Gastrocnemius medialis (tissue), 4 donors: ENCODE measurements at regions of chr7 and their contacts with region 1.

Region 1: GRCh38 chr7:5237286-5237685 is 45.5 kb upstream of the SLC29A4 start:
- DNase-seq: peak; percentile 44 to 58
- ATAC-seq: peak; percentile 52 to 55
- H3K4me3 ChIP-seq: peak overlapping the region in 1 of 4 donors; percentile 17
- H3K27ac ChIP-seq: peak overlapping the region in 1 of 4 donors; percentile 7
- H3K4me1 ChIP-seq: peaks cover 5 to 10% of the 10 kb centered on the region in 2 donors
- H3K27me3 ChIP-seq: peaks cover 0 to 5% (median 0%) of the 10 kb centered on the region in 3 donors
- CTCF ChIP-seq: no peak
- POLR2A ChIP-seq: peak; percentile 13 to 34

Region 2: DNA sequence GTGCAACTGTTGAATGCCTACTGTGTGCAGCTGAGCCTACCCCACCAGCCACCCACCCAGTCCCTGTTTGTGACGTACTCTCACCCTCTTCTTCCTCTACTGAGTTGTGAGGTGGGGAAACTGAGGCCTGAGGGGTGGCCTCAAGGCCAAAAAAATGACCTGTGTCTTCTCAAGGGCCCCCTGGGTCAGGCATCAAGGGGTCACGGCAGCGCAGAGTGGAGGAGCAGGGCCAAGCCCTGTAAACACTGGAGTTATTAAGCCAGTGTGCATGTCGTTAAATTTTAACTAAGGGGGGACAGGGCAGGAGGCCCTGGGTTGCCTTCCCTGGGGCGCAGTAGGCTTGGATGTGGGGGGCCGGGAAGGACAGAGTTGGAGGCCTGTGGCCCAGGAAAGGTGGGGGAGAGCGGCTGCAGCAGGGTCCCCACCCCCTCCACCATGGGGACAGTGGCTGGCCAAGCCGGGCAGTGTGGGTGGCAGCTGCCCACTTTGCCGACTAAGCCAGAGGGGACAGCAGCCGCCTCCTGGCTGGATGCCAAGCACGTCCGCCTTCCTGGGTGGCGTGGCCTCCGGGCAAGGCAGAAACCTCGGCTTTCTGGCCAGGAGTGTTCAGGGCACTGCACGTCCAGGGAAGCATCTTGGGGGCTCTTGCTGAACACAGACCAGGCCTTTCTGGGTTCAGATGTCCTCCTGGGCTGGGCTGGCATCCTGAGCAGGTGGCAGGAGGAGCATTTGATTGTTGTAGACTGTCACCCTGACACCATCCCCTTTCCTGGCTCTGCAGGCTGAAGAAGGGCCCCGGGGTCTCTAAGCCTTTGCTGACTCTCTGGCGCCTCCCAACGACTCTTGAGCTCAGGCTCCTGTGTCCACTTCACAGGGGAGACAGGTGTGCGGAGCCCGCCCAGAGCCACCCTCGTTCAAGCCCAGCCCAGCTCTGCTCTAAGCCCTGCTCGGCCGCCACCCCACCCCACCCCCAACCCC is 47.3 kb after region 1 on chr7:
- in situ Hi-C with region 1: no loop called
- intact Hi-C with region 1: loop called (anchors 2 kb)
- DNase-seq: no peak
- ATAC-seq: no peak
- H3K4me3 ChIP-seq: no peak overlapping the region
- H3K27ac ChIP-seq: no peak overlapping the region
- H3K4me1 ChIP-seq: no peaks in the 10 kb centered on the region
- H3K27me3 ChIP-seq: peaks cover 0 to 9% (median 6%) of the 10 kb centered on the region in 3 donors
- CTCF ChIP-seq: no peak
- POLR2A ChIP-seq: no peak